Activated naive CD4-positive, alpha-beta T cell treated with anti-CD3 and anti-CD28 coated beads for 36 hours (primary cell): ENCODE measurements at regions of chr17 and their contacts with region 1.

Region 1: DNA sequence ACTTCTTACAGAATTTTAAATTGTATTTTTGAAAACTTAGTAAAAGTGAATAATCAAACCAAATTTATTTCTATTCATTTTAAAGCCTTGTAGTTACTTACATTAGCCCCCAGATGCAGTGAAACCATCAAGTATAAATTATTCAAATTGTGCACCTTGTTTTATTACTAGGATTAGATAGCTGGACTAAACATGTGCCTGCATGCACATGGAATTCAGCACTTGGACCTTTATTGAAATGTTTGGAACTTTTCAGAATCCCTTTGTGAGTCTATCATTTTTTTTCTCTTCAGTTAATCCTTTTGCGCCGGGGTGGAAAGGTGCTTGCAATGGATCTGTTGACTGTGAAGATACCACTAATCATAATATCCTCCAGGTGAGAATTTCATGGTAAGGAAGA is 4.7 kb downstream of the ZPBP2 start:
- DNase-seq: no peak
- H3K4me3 Mint-ChIP-seq: no peak overlapping the region
- H3K27ac Mint-ChIP-seq: no peak overlapping the region
- H3K4me1 Mint-ChIP-seq: peaks cover 9% of the 10 kb centered on the region
- H3K27me3 Mint-ChIP-seq: no peaks in the 10 kb centered on the region

Region 2: DNA sequence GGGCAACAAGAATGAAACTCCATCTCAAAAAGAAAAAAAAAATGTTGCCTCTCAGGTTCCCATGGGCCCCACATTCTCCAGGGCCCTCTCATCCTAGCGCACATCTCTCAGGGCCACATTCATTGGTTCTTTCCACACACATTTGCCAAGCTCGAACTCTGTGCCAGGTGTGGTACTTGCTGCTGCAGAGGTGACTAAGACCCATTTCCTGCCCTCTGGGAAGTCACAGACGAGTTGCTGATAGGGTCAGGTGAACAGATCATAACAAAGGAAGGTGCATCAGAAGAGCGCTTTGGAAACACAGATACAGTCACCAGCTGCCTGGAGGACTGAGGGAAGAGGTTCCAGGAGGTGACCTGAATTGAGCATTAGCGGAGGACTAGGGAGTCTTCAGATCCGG is 91.1 kb after region 1 on chr17:
- CTCF ChIA-PET with region 1: interaction called, 17 read pairs
- intact Hi-C with region 1: loop called (anchors 1 kb)
- DNase-seq: peak; percentile 63
- H3K4me3 Mint-ChIP-seq: no peak overlapping the region
- H3K27ac Mint-ChIP-seq: peak overlapping the region; percentile 73
- H3K4me1 Mint-ChIP-seq: peaks cover 19% of the 10 kb centered on the region
- H3K27me3 Mint-ChIP-seq: no peaks in the 10 kb centered on the region

Region 3: DNA sequence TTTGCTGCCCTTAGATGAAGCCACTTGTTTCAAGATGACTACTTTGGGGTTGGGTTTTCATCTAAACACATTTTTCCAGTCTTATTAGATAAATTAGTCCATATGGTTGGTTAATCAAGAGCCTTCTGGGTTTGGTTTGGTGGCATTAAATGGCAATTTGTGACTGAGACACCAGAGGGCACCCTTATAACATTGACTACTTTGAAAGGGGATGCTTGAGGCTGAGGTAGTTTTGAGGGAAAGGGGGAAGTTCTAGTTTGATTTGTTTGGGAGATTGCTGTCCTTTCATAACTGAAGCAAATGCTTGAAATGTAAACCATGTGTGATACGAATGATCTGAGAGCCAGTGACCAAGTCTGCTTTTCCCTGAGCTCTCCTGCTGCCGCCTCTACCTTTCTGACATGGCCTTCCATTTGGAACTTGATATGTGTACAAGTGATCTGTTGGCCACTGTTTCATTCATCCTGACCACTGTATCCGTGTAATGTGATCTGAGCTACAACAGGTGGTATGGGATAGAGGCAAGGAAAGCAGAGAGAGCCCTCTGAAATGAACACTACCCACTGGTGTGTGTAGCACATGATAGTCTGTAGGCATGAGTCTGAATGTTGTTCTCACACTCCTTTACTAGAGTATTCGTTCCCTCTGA is 430.4 kb after region 1 on chr17:
- CTCF ChIA-PET with region 1: no interaction called
- intact Hi-C with region 1: no loop called
- DNase-seq: peak; percentile 61
- H3K4me3 Mint-ChIP-seq: no peak overlapping the region
- H3K27ac Mint-ChIP-seq: no peak overlapping the region
- H3K4me1 Mint-ChIP-seq: peaks cover 10% of the 10 kb centered on the region
- H3K27me3 Mint-ChIP-seq: no peaks in the 10 kb centered on the region